Calu3 (cell line): ENCODE measurements at regions of chr7 and their contacts with region 1.

Region 1: GRCh38 chr7:76129836-76130235 is 71.9 kb upstream of the SRRM3 start:
- DNase-seq: no peak
- H3K4me3 Mint-ChIP-seq: no peak overlapping the region
- H3K27ac Mint-ChIP-seq: no peak overlapping the region
- H3K4me1 Mint-ChIP-seq: no peaks in the 10 kb centered on the region
- H3K27me3 Mint-ChIP-seq: peaks cover 20% of the 10 kb centered on the region
- CTCF ChIP-seq: no peak

Region 2: DNA sequence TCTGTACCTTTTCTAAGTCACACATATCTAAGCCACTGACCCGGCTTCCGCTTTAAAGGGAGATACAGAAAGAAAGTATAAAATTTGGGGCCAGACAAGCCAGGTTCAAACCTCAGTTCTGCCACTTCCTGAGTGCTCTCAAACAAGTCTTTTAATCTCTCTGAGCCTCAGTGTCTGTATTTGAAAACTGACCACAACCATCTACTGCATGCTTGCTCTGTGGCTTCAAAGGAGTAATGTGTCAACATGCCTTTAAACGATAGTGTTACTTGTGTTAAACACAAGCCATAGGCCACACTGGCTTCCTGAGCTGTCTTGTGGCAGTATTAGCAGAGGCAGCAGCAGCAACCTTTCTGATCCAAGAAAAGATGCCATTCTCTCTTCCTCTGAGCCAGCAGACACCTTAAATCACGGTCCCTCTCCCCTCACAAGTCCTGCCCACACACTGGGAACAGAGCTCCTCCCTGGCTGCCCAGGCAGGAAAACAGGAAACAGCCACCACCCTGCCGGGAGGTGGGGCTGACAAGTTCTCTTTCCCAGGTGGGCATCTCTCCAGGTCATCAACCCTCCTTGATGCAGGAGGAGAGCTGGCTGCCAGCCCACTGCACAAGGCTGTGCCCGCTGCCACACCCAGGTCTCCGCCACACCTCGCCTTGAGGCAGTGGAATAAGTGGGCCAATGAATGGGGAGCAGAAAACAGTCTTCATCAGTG is 401.8 kb before region 1 on chr7:
- CTCF ChIA-PET with region 1: no interaction called
- intact Hi-C with region 1: no loop called
- DNase-seq: peak; percentile 64
- H3K4me3 Mint-ChIP-seq: no peak overlapping the region
- H3K27ac Mint-ChIP-seq: no peak overlapping the region
- H3K4me1 Mint-ChIP-seq: no peaks in the 10 kb centered on the region
- H3K27me3 Mint-ChIP-seq: no peaks in the 10 kb centered on the region
- CTCF ChIP-seq: no peak

Region 3: DNA sequence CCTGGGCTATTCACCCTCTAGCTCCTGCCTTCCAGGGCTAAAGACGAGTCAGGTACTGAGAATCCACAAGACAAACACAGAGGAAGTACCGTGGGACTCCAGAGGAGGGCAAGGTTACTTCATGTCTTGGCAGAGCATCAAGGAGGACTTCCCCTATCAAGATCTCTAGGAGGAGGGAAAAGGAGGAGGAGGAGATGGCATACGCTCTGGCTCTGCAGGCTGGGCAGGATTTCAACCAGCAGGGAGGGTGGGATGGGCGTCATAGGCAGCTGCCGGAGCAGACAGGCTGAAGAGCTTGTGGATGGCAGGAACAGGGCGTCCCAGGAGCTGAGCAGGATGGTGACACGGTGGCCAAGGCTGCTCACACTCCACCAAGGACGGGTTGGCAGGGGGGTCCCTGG is 60.6 kb before region 1 on chr7:
- CTCF ChIA-PET with region 1: interaction called, 4 read pairs
- intact Hi-C with region 1: loop called (anchors 1 kb)
- DNase-seq: peak; percentile 47
- H3K4me3 Mint-ChIP-seq: no peak overlapping the region
- H3K27ac Mint-ChIP-seq: no peak overlapping the region
- H3K4me1 Mint-ChIP-seq: no peaks in the 10 kb centered on the region
- H3K27me3 Mint-ChIP-seq: no peaks in the 10 kb centered on the region
- CTCF ChIP-seq: no peak

Region 4: DNA sequence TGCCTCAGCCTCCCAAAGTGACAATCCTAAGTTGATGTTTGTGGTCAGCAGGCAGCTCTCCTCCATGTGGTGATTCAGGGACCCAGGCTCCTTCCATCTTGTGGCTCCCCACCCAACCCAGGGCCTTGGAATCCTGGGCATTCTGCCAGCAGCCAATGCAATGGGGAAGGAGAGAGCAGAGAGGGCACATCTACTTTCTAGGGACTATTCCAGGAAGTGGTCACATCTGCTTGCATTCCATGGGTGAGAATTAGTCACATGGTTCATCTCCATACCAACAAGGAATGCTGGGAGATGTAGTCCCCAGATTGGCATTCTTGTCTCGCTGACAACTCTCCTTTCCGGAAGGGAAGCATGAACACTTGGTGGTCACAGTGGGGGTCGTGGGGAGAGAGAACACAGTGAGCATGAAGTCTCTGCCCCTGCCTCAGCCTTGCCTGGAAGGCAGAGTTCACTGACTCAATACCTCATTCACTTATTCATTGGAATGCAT is 62.0 kb after region 1 on chr7:
- CTCF ChIA-PET with region 1: no interaction called
- intact Hi-C with region 1: no loop called
- DNase-seq: peak; percentile 24
- H3K4me3 Mint-ChIP-seq: no peak overlapping the region
- H3K27ac Mint-ChIP-seq: no peak overlapping the region
- H3K4me1 Mint-ChIP-seq: no peaks in the 10 kb centered on the region
- H3K27me3 Mint-ChIP-seq: peaks cover 49% of the 10 kb centered on the region
- CTCF ChIP-seq: no peak

Region 5: DNA sequence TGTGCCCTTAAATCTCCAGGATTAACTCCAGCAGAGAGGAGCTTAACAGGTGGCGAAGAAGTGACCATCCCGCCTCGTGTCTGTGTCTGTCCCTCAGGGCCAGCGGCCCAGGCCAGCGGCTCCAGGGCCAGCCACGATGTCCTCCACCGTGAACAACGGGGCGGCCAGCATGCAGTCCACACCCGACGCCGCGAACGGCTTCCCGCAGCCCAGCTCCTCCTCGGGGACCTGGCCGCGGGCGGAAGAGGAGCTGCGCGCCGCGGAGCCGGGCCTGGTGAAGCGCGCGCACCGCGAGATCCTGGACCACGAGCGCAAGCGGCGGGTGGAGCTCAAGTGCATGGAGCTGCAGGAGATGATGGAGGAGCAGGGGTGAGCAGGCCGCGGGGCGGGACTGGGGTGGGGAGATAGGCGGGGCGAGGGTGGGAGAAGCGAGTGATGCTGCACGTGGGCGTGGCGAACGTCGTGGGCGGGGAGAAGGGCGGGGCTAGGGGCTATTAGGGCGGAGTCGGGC is 105.2 kb after region 1 on chr7:
- CTCF ChIA-PET with region 1: no interaction called
- intact Hi-C with region 1: no loop called
- DNase-seq: peak; percentile 63
- H3K4me3 Mint-ChIP-seq: no peak overlapping the region
- H3K27ac Mint-ChIP-seq: no peak overlapping the region
- H3K4me1 Mint-ChIP-seq: no peaks in the 10 kb centered on the region
- H3K27me3 Mint-ChIP-seq: peaks cover 83% of the 10 kb centered on the region
- CTCF ChIP-seq: no peak